ENCODE measurements at regions of chr22 and their contacts with region 1.

Region 1: DNA sequence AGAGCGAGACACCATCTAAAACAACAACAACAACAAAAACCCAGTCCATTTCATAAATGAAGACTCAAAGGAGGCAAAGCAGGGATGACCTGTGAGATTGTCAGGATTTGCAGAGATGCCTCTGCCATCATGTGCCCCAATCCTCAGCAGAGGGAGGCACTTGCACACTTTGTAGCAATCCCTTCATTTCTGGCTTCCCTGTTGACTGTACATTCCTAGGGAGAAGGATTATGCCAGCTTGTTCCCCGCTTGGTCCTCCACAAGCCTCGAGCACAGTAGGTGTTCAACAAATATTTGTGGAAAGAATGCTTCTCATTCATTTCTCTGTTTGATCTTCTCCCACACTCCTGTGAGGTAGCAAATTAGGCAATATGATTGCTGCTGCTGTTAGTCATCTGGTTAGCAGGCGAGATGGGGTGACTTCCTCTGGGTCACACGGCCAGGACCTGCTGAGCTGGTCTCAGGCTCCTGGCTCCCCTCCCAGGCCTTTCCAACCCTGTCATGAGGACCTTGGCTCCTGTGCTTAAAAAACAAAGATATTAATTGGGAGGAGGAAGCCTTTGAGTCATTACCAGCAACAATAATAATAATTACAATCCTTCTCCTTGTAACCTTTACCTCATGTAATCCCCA is 34.1 kb downstream of the LIF start:
- DNase-seq: peak; percentile 99
- H3K4me3 ChIP-seq: no peak overlapping the region
- H3K27ac ChIP-seq: peak overlapping the region; percentile 96
- H3K4me1 ChIP-seq: peaks cover 63% of the 10 kb centered on the region
- H3K27me3 ChIP-seq: no peaks in the 10 kb centered on the region
- CTCF ChIP-seq: peak in 1 of 2 donors; percentile 37

Region 2: GRCh38 chr22:29787371-29787980 is 425.0 kb before region 1 on chr22:
- CTCF ChIA-PET with region 1: no interaction called
- dilution Hi-C with region 1: no loop called
- in situ Hi-C with region 1: no loop called
- intact Hi-C with region 1: no loop called
- DNase-seq: peak; percentile 41
- H3K4me3 ChIP-seq: no peak overlapping the region
- H3K27ac ChIP-seq: no peak overlapping the region
- H3K4me1 ChIP-seq: peaks cover 4% of the 10 kb centered on the region
- H3K27me3 ChIP-seq: no peaks in the 10 kb centered on the region
- CTCF ChIP-seq: no peak

Region 3: GRCh38 chr22:30245985-30246901 is 33.8 kb after region 1 on chr22 and contains the start of gene LIF:
- CTCF ChIA-PET with region 1: interaction called, 9 read pairs
- dilution Hi-C with region 1: loop called (anchors 5 kb)
- in situ Hi-C with region 1: no loop called
- intact Hi-C with region 1: loop called (anchors 1 kb)
- DNase-seq: peak; percentile 76
- H3K4me3 ChIP-seq: peak within 1 kb of the TSS; percentile 74 to 80 (median 78)
- H3K27ac ChIP-seq: peak within 1 kb of the TSS; percentile 80
- H3K4me1 ChIP-seq: peaks cover 60% of the 10 kb centered on the region
- H3K27me3 ChIP-seq: no peaks in the 10 kb centered on the region
- CTCF ChIP-seq: peak in 1 of 2 donors; percentile 31
- total RNA-seq, gene LIF: 31.2 to 35.8 TPM

Region 4: GRCh38 chr22:30253205-30253852 is 40.9 kb after region 1 on chr22:
- CTCF ChIA-PET with region 1: interaction called, 9 read pairs
- dilution Hi-C with region 1: no loop called
- in situ Hi-C with region 1: no loop called
- intact Hi-C with region 1: loop called (anchors 1 kb)
- DNase-seq: no peak
- H3K4me3 ChIP-seq: no peak overlapping the region
- H3K27ac ChIP-seq: no peak overlapping the region
- H3K4me1 ChIP-seq: peaks cover 44% of the 10 kb centered on the region
- H3K27me3 ChIP-seq: no peaks in the 10 kb centered on the region
- CTCF ChIP-seq: no peak